Naive thymus-derived CD4-positive, alpha-beta T cell (primary cell): ENCODE measurements at regions of chr2 and their contacts with region 1.

Region 1: GRCh38 chr2:202911512-202912341 is at the starts of genes CARF and WDR12:
- DNase-seq: peak; percentile 81 to 93 (median 89)
- ATAC-seq: peak; percentile 93
- H3K4me3 ChIP-seq: peak within 1 kb of the TSS; percentile 82
- H3K4me3 Mint-ChIP-seq: peak within 1 kb of the TSS; percentile 90 to 100 (median 98)
- H3K27ac ChIP-seq: peak within 1 kb of the TSS; percentile 79
- H3K27ac Mint-ChIP-seq: peak within 1 kb of the TSS; percentile 93 to 99 (median 97)
- H3K4me1 ChIP-seq: peaks cover 4 to 11% of the 10 kb centered on the region in 2 donors
- H3K4me1 Mint-ChIP-seq: peaks cover 24 to 50% (median 34%) of the 10 kb centered on the region in 7 donors
- H3K27me3 ChIP-seq: no peaks in the 10 kb centered on the region
- H3K27me3 Mint-ChIP-seq: no peaks in the 10 kb centered on the region
- total RNA-seq, gene CARF: 10.2 to 31.2 (median 15.4) TPM
- total RNA-seq, gene WDR12: 17.2 to 50.4 (median 20.8) TPM

Region 2: DNA sequence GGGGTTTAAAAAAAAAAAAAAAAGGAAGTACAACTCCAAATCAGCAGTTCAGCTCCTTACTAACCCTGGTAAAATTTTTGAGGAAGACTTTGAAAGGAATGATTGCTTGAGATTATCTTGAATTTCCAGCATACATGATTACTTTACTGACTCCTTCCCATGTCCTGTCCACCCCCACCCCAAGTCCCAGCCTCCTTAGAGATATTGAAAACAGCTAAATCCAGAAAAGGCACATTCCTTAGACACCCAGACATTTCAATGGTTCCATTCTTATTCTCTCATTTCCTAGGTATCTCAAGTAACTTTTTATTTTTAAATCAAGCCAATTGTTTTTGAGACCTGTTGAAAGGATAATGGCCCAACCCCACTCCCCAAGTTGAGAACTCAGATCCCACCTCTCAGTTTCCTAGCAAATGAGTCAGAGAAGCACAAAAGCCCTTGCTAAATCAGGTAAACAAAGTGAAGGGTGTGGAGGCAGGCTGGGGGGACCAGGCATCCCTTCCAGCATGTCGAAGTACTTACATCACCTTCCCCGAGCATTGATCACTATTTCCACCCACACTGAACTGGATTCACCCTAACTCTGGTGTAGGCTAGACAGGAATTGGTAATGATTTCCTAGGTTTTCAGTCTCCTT is 973.5 kb before region 1 on chr2:
- CTCF ChIA-PET with region 1: no interaction called
- POLR2A ChIA-PET with region 1: no interaction called
- intact Hi-C with region 1: no loop called
- DNase-seq: no peak
- ATAC-seq: no peak
- H3K4me3 ChIP-seq: no peak overlapping the region
- H3K4me3 Mint-ChIP-seq: no peak overlapping the region
- H3K27ac ChIP-seq: no peak overlapping the region
- H3K27ac Mint-ChIP-seq: no peak overlapping the region
- H3K4me1 ChIP-seq: no peaks in the 10 kb centered on the region
- H3K4me1 Mint-ChIP-seq: no peaks in the 10 kb centered on the region
- H3K27me3 ChIP-seq: no peaks in the 10 kb centered on the region
- H3K27me3 Mint-ChIP-seq: peaks cover 4 to 16% (median 11%) of the 10 kb centered on the region in 5 donors

Region 3: DNA sequence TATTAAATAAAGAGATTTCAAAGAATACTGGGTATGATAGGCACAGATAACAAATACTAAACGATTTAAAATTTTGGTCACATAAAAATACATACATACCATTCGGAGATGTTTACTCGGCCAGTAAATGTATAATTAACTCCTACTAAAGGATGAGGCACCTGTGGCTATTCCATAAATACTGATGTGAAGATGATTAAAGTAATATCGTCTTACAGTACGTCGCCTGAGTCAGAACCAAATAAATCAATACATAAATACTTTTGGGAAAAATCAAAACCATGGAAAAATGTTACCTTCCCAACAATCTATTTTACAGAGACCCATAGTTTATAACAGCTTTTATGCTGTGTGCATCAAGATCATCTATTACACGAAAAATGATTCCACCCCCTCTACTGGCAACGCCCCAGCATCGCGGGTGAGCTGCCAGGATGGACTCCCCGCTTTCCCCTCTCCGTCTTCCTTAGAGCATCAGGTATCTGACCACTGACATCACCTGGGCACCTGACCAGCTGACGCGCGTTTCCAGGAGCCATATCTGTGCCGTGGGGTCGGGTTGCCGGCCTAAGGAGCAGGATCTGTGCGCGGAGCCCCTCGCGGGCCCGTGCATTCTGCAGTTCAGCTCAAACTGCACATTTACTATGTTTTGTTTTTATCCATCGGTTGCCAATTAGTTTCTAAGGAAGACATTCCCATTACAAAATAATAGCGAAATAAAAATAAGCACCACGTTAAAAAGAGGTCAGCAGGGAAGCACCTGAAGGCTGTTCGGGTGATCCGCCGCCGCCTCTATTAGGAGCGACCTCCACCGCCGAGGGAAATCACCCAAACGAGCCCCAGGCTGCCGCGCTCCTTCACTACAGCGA is 41.1 kb before region 1 on chr2:
- CTCF ChIA-PET with region 1: no interaction called
- POLR2A ChIA-PET with region 1: interaction called, 6 read pairs
- intact Hi-C with region 1: loop called (anchors 1 kb)
- DNase-seq: peak; percentile 32 to 68 (median 57)
- ATAC-seq: peak; percentile 85
- H3K4me3 ChIP-seq: peak overlapping the region; percentile 84
- H3K4me3 Mint-ChIP-seq: peak overlapping the region; percentile 89 to 98 (median 94)
- H3K27ac ChIP-seq: peak overlapping the region; percentile 60
- H3K27ac Mint-ChIP-seq: peak overlapping the region in 7 of 9 donors; percentile 8 to 84 (median 66)
- H3K4me1 ChIP-seq: peaks cover 0 to 3% of the 10 kb centered on the region in 2 donors
- H3K4me1 Mint-ChIP-seq: peaks cover 0 to 13% (median 7%) of the 10 kb centered on the region in 7 donors
- H3K27me3 ChIP-seq: no peaks in the 10 kb centered on the region
- H3K27me3 Mint-ChIP-seq: no peaks in the 10 kb centered on the region

Region 4: DNA sequence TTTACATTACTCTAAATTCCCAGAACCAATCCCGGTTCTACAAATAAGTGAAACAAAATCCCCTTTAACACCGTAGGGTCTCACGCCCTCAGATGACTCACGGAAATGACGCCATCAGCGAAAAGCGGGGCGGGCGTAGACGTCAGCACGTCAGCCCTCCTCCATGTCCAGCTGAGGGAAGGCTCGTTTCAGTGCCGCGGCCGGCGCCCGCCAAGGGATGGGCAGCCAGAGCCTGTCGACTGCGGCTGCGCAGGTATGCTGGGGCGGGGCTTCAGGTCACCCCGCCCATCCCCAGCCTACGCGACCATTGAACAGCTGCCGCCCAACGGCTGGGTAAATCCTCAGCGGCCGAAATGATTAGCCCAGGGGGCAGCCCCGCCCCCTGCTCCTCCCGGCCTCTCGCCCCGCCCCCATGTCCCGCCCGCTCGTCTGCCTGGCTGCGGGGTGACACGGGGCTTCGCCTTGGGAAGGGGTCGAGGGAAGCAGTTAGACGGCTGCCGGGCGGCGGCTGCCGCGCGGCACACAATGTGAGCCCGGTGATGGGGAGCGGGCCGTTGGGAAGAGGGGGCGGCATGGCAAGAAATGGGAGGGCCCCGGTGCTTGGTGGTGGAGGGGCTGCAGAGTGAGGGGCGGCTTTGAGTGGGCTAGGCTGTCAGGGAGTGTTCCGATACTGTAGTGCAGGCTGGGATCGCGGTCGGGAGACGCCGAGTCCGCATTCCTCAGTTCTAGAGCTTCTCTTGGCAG is 102.9 kb after region 1 on chr2 and contains the start of gene NBEAL1:
- CTCF ChIA-PET with region 1: no interaction called
- POLR2A ChIA-PET with region 1: interaction called, 3 read pairs
- intact Hi-C with region 1: loop called (anchors 1 kb)
- DNase-seq: peak; percentile 88 to 99 (median 90)
- ATAC-seq: peak; percentile 95
- H3K4me3 ChIP-seq: peak within 1 kb of the TSS; percentile 92
- H3K4me3 Mint-ChIP-seq: peak within 1 kb of the TSS; percentile 90 to 97 (median 95)
- H3K27ac ChIP-seq: peak within 1 kb of the TSS; percentile 92
- H3K27ac Mint-ChIP-seq: peak within 1 kb of the TSS; percentile 84 to 98 (median 94)
- H3K4me1 ChIP-seq: peaks cover 5 to 14% of the 10 kb centered on the region in 2 donors
- H3K4me1 Mint-ChIP-seq: peaks cover 18 to 48% (median 41%) of the 10 kb centered on the region in 7 donors
- H3K27me3 ChIP-seq: no peaks in the 10 kb centered on the region
- H3K27me3 Mint-ChIP-seq: peaks cover 0 to 19% (median 0%) of the 10 kb centered on the region in 5 donors
- total RNA-seq, gene NBEAL1: 11.6 to 15.9 (median 12.6) TPM